Activated naive CD4-positive, alpha-beta T cell treated with anti-CD3 and anti-CD28 coated beads, Interleukin-2, amount 10 ng/mL, durations not matched to agents 7 days and 5 days (primary cell): ENCODE measurements at regions of chr14 and their contacts with region 1.

Region 1: DNA sequence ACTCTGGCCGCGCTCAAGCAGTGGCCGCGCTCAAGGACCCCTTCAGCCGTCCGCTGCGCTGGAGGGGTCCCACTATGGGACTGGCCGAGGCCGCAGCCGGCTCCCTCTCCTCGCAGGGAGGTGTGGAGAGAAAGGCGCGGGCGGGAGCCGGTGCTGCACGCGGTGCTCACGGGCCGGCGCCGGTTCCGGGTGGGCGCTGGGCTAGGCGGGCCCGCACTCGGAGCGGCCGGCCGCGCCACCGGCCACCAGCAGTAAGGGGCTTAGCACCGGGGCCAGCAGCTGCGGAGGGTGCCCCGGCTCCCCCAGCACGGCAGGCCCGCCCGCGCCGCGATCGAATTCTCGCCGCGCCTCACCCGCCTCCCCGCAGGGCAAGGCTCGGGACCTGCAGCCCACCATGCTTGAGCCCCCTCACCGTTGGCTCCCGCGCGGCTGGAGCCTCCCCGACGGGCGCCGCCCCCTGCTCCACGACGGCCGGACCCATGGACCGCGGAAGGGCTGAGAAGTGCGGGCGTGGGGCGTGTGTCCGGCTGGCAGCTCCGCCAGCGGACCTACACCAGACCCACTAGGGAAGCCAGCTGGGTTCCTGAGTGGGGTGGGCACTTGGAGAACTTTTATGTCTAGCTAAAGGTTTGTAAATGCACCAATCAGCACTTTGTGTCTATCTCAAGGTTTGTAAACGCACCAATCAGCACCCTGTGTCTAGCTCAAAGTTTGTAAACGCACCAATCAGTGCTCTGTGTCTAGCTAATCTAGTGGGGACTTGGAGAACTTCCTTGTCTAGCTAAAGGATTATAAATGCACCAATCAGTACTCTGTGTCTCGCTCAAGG is 49.5 kb downstream of the KLHL28 start:
- DNase-seq: no peak
- H3K4me3 Mint-ChIP-seq: peak overlapping the region; percentile 31
- H3K27ac Mint-ChIP-seq: no peak overlapping the region
- H3K4me1 Mint-ChIP-seq: peaks cover 10% of the 10 kb centered on the region
- H3K27me3 Mint-ChIP-seq: peaks cover 50% of the 10 kb centered on the region

Region 2: GRCh38 chr14:44941591-44941990 is 29.3 kb after region 1 on chr14:
- CTCF ChIA-PET with region 1: no interaction called
- DNase-seq: no peak
- H3K4me3 Mint-ChIP-seq: no peak overlapping the region
- H3K27ac Mint-ChIP-seq: no peak overlapping the region
- H3K4me1 Mint-ChIP-seq: peaks cover 11% of the 10 kb centered on the region
- H3K27me3 Mint-ChIP-seq: no peaks in the 10 kb centered on the region

Region 3: GRCh38 chr14:44988694-44989093 is 76.4 kb after region 1 on chr14:
- CTCF ChIA-PET with region 1: no interaction called
- DNase-seq: no peak
- H3K4me3 Mint-ChIP-seq: no peak overlapping the region
- H3K27ac Mint-ChIP-seq: no peak overlapping the region
- H3K4me1 Mint-ChIP-seq: no peaks in the 10 kb centered on the region
- H3K27me3 Mint-ChIP-seq: no peaks in the 10 kb centered on the region

Region 4: DNA sequence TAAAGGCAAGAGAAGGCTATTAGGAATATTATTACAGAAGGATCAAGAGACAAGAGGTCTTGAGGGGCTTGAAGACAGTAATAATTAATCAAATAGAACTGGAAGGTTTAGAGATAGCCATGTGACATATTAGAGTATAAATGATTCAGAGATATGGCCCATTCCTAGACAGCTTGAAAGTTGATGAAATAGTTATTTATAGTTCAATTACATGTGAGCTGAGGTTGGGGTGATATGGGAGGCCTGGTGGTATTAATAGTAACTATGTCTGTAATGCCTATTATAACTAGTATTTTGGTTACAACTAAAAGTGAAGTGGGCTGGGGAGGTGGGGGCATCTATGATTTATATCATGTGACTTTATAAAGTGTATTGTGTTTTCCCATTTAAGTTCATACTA is 354.8 kb after region 1 on chr14:
- CTCF ChIA-PET with region 1: interaction called, 10 read pairs
- DNase-seq: no peak
- H3K4me3 Mint-ChIP-seq: no peak overlapping the region
- H3K27ac Mint-ChIP-seq: no peak overlapping the region
- H3K4me1 Mint-ChIP-seq: no peaks in the 10 kb centered on the region
- H3K27me3 Mint-ChIP-seq: peaks cover 19% of the 10 kb centered on the region